Posterior vena cava (tissue), 2 donors: ENCODE measurements at regions of chr14 and their contacts with region 1.

Region 1: DNA sequence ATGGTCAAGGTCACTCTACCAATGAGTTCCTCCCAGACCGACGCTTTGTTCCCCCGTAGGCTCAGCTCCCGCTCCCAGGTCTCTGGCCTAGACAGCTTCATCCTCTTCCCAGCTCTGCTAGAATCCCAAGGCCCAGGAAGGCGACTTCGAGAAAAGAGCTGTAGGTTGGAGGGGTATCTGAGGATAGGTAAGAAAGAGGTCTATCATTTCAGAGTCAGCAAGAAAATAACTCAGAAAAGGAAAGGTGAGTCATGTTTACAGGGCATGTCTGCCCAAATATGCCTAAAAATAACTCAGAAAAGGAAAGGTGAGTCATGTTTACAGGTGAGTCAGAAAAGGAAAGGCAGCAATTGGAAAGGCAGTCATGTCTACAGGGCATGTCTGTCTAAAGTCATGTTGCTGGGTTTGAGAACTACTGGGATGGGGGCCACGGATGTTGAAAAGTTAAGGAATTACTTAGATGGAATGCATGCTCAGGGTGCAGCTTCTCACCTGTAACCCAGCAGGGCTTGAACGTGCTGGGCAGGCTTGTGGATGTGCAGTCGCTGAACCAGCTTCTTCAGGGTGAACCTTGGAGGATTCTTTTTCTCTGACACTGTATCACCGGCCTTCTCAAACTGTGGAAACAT is 12.2 kb downstream of the TEP1 start:
- DNase-seq: no peak

Region 2: GRCh38 chr14:20035449-20035848 is 365.6 kb before region 1 on chr14:
- intact Hi-C with region 1: no loop called
- DNase-seq: no peak

Region 3: GRCh38 chr14:20421267-20421666 is 20.2 kb after region 1 on chr14:
- intact Hi-C with region 1: loop called in 1 of 2 experiments (anchors 1 kb)
- DNase-seq: no peak

Region 4: DNA sequence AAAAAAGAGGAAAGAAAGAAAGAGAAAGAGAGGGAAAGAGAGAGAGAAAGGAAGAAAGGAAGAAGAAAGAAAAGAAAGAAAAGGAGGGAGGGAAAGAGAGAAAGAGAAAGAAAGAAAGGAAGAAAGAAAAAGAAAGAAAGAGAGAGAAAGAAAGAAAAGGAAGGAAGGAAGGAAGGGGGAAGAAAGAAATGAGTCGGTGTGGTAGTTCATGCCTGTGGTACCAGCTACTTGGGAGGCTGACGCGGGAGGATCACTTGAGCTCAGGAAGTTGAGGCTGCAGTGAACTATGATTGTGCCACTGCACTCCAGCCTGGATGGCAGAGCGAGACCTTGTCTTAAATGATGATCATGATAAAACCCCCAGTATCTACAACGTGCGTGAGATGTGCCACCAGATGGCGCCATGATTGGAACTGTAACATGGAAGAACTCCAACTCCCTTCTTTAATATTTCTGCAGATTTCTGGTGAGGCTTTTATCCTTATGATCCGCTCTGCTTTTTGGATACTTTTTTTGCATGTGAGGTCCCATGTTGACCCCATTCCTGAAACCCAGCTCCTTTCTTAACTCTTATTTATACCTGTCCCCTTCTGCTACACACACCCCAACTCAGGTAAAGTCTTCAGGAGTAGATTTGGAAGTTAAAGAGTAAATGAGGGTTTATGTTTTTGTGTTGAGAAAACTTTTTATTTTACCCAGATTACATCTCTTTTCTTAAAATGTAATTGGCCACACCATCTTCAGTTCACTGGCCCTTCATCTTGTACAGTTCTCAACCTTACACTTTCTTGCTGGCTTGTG is 129.9 kb after region 1 on chr14:
- intact Hi-C with region 1: loop called in 1 of 2 experiments (anchors 5 kb)
- DNase-seq: peak; percentile 91